ENCODE measurements at regions of chr5 and their contacts with region 1.

Region 1: GRCh38 chr5:159975462-159976019 is 33.4 kb upstream of the TTC1 start:
- DNase-seq: no peak
- H3K4me3 ChIP-seq: no peak overlapping the region
- H3K27ac ChIP-seq: no peak overlapping the region
- H3K4me1 ChIP-seq: no peaks in the 10 kb centered on the region
- H3K27me3 ChIP-seq: no peaks in the 10 kb centered on the region
- CTCF ChIP-seq: no peak
- POLR2A ChIP-seq: no peak

Region 2: DNA sequence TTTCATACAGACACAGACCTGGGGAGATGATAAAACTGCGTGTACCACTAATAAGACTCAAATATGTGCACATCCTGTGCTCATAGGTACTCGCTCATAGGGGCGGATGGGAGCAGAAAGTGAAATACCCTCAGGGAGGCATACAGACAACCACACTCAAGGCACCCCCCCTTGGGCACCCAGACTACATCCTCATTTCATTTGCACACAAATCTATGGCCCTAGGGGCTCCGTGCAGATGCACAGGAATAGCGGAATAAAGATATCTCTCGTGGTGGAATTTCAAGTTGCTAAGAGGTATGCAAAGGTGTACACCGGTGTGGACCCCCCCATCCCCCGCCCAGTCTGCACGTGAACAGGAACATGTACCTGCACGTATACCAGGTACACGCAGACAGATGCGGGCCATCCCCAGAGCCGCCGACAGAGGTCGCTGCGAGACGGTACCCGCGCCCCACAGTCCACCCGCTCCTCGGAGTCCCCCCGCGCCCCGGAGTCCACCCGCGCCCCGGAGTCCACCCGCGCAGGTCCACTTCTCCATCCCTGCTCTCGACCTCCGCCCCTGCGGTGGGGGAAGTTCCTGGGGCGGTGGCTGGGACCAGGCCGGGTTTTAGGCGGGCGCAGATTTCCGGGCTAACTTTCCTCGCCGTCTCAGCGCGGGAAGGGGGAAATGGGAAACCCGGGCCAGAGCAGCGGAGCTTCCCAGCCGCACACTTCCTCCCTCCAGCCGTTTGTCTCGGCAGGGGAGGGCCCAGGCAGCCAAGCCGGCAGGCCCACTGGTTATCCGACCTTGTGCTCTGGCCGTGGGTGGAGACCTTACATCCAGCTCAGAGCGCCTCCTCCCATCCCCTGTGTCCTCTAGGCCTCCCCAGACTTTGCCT is 644.2 kb before region 1 on chr5:
- intact Hi-C with region 1: loop called (anchors 10 kb)
- DNase-seq: peak; percentile 37
- H3K4me3 ChIP-seq: peak overlapping the region; percentile 15 to 24
- H3K27ac ChIP-seq: no peak overlapping the region
- H3K4me1 ChIP-seq: no peaks in the 10 kb centered on the region
- H3K27me3 ChIP-seq: no peaks in the 10 kb centered on the region
- CTCF ChIP-seq: peak; percentile 30 to 61 (median 48)
- POLR2A ChIP-seq: no peak